ENCODE measurements at regions of chr2 and their contacts with region 1.

Region 1: GRCh38 chr2:162221064-162221463 is 22.2 kb downstream of the FAP start:
- DNase-seq: peak; percentile 72
- ATAC-seq: peak; percentile 60
- H3K4me3 Mint-ChIP-seq: no peak overlapping the region
- H3K27ac Mint-ChIP-seq: no peak overlapping the region
- H3K4me1 Mint-ChIP-seq: peaks cover 4% of the 10 kb centered on the region
- H3K27me3 Mint-ChIP-seq: peaks cover 34% of the 10 kb centered on the region

Region 2: GRCh38 chr2:162153608-162154224 is 67.3 kb before region 1 on chr2:
- CTCF ChIA-PET with region 1: interaction called, 30 read pairs
- POLR2A ChIA-PET with region 1: no interaction called
- DNase-seq: peak; percentile 76
- ATAC-seq: peak; percentile 92
- H3K4me3 Mint-ChIP-seq: no peak overlapping the region
- H3K27ac Mint-ChIP-seq: no peak overlapping the region
- H3K4me1 Mint-ChIP-seq: peaks cover 2% of the 10 kb centered on the region
- H3K27me3 Mint-ChIP-seq: peaks cover 36% of the 10 kb centered on the region

Region 3: DNA sequence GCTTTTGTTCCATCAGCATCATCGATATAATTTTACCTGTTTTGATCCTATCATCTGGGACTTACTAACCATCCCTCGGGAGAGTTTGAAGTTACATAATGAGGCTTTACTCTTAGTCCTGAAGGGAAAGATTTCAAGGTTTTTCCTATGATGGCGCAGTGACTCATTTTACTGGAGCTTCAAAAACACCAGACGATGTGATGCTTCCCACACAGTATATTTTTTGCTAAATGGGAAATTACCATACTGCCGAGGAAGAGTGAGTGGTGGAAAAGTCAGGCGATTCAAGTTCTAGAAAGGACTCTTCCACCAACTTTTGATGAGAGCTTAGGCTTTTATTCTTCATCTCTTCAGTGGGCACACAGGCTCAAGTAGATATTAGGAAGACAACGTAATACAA is 24.4 kb before region 1 on chr2:
- CTCF ChIA-PET with region 1: interaction called, 14 read pairs
- POLR2A ChIA-PET with region 1: no interaction called
- DNase-seq: no peak
- ATAC-seq: no peak
- H3K4me3 Mint-ChIP-seq: no peak overlapping the region
- H3K27ac Mint-ChIP-seq: no peak overlapping the region
- H3K4me1 Mint-ChIP-seq: no peaks in the 10 kb centered on the region
- H3K27me3 Mint-ChIP-seq: peaks cover 35% of the 10 kb centered on the region

Region 4: GRCh38 chr2:162256591-162256991 is 35.5 kb after region 1 on chr2:
- CTCF ChIA-PET with region 1: interaction called, 20 read pairs
- POLR2A ChIA-PET with region 1: no interaction called
- DNase-seq: no peak
- ATAC-seq: no peak
- H3K4me3 Mint-ChIP-seq: no peak overlapping the region
- H3K27ac Mint-ChIP-seq: no peak overlapping the region
- H3K4me1 Mint-ChIP-seq: peaks cover 12% of the 10 kb centered on the region
- H3K27me3 Mint-ChIP-seq: peaks cover 15% of the 10 kb centered on the region

Region 5: GRCh38 chr2:162301151-162301804 is 80.2 kb after region 1 on chr2:
- CTCF ChIA-PET with region 1: interaction called, 253 read pairs
- POLR2A ChIA-PET with region 1: interaction called, 5 read pairs
- DNase-seq: peak; percentile 76
- ATAC-seq: peak; percentile 75
- H3K4me3 Mint-ChIP-seq: no peak overlapping the region
- H3K27ac Mint-ChIP-seq: no peak overlapping the region
- H3K4me1 Mint-ChIP-seq: no peaks in the 10 kb centered on the region
- H3K27me3 Mint-ChIP-seq: no peaks in the 10 kb centered on the region

Region 6: GRCh38 chr2:162333968-162334367 is 112.9 kb after region 1 on chr2:
- CTCF ChIA-PET with region 1: interaction called, 26 read pairs
- POLR2A ChIA-PET with region 1: no interaction called
- DNase-seq: peak; percentile 41
- ATAC-seq: peak; percentile 63
- H3K4me3 Mint-ChIP-seq: no peak overlapping the region
- H3K27ac Mint-ChIP-seq: no peak overlapping the region
- H3K4me1 Mint-ChIP-seq: peaks cover 1% of the 10 kb centered on the region
- H3K27me3 Mint-ChIP-seq: no peaks in the 10 kb centered on the region

Measured in activated CD8-positive, alpha-beta T cell treated with anti-CD3 and anti-CD28 coated beads, Interleukin-2, amount 10 ng/mL, durations not matched to agents 7 days and 5 days (primary cell).